IMR-90 (cell line): ENCODE measurements at regions of chr17 and their contacts with region 1.

Region 1: DNA sequence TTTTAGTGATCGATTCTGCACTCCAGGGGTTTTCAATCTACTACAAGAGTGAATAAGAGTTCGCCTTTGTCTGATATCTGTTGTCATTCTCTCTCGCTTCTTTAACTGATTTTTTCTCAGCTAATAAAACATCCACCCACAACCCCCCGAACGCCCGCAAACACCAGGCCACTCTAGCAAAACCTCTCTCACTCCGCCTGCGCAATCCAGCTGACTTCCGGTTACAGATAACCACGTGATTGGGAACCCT is 338 bp upstream of the RPL19 start:
- DNase-seq: peak; percentile 96
- ATAC-seq: peak; percentile 52
- H3K4me3 ChIP-seq: peak overlapping the region; percentile 37
- H3K27ac ChIP-seq: peak overlapping the region; percentile 79
- H3K4me1 ChIP-seq: peaks cover 19% of the 10 kb centered on the region
- H3K27me3 ChIP-seq: no peaks in the 10 kb centered on the region
- CTCF ChIP-seq: no peak
- POLR2A ChIP-seq: no peak
- RAD21 ChIP-seq: no peak

Region 2: GRCh38 chr17:39230361-39230760 is 30.6 kb after region 1 on chr17:
- CTCF ChIA-PET with region 1: interaction called, 8 read pairs
- POLR2A ChIA-PET with region 1: interaction called, 15 read pairs
- dilution Hi-C with region 1: no loop called
- in situ Hi-C with region 1: no loop called
- intact Hi-C with region 1: no loop called
- DNase-seq: no peak
- ATAC-seq: no peak
- H3K4me3 ChIP-seq: no peak overlapping the region
- H3K27ac ChIP-seq: no peak overlapping the region
- H3K4me1 ChIP-seq: peaks cover 4% of the 10 kb centered on the region
- H3K27me3 ChIP-seq: peaks cover 20% of the 10 kb centered on the region
- CTCF ChIP-seq: no peak
- POLR2A ChIP-seq: no peak
- RAD21 ChIP-seq: no peak

Region 3: DNA sequence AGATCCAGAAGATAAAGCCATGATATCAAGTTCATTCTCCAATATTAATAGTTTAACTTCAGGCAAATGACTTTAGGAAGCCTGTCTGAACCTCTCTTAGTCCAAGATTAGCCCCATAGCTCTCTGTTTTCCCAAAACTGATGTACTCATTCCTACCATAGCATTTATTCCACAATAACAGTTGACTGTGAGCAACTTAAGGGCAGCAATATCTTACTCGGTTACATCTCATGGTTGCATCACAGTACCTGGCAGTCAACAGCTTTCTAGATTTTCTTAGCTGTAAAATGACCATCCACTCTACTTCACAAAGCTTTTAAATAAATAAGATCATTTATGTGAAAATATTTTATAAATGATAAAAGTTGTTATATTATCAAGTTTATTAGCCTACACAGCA is 84.2 kb after region 1 on chr17:
- CTCF ChIA-PET with region 1: no interaction called
- POLR2A ChIA-PET with region 1: interaction called, 18 read pairs
- dilution Hi-C with region 1: no loop called
- in situ Hi-C with region 1: no loop called
- intact Hi-C with region 1: no loop called
- DNase-seq: no peak
- ATAC-seq: no peak
- H3K4me3 ChIP-seq: no peak overlapping the region
- H3K27ac ChIP-seq: no peak overlapping the region
- H3K4me1 ChIP-seq: peaks cover 4% of the 10 kb centered on the region
- H3K27me3 ChIP-seq: no peaks in the 10 kb centered on the region
- CTCF ChIP-seq: no peak
- POLR2A ChIP-seq: no peak
- RAD21 ChIP-seq: no peak